ENCODE measurements at regions of chr16 and their contacts with region 1.

Region 1: GRCh38 chr16:68093816-68094613 is 8.8 kb downstream of the NFATC3 start:
- H3K4me3 ChIP-seq: no peak overlapping the region
- H3K27ac ChIP-seq: no peak overlapping the region
- H3K4me1 ChIP-seq: peaks cover 28% of the 10 kb centered on the region
- CTCF ChIP-seq: no peak

Region 2: GRCh38 chr16:68116256-68116867 is 22.3 kb after region 1 on chr16:
- CTCF ChIA-PET with region 1: interaction called, 12 read pairs
- POLR2A ChIA-PET with region 1: no interaction called
- H3K4me3 ChIP-seq: no peak overlapping the region
- H3K27ac ChIP-seq: no peak overlapping the region
- H3K4me1 ChIP-seq: no peaks in the 10 kb centered on the region
- CTCF ChIP-seq: no peak

Measured in HEK293 (cell line).